A673 (cell line): ENCODE measurements at regions of chrX and their contacts with region 1.

Region 1: DNA sequence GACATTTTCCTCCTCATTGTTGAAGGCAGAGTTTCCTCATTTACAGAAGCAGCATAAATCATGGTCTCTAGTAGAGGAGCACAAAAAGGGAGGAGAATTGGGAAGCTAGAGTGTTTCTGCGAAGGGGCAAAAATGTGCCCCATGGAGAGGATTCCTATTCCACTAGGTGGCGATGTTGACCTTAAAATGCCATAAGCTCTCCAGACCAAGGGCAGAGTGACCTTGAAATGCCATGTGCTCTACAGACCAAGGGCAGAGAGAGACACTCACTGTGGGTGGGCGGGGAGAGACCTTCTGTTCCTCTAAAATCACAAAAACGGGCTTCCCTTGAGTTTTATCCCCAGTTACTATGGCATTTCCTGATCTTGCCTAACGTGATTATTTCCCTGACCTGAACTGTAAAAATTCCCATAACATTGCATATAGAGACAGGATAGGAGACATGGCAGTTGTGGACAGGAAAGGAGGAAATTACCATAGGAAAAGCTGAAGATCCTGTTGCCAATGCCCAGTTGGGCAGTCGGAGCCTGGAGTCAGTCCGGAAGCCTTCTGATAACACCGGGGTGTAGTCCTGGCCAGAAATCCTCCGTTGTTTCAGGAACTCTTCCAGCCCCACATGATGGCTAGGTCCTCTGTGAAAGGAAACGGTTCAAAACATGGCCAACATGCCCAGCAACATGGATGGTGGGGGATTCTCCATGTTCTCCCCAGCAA is 567.7 kb downstream of the MAGEB5 start:
- DNase-seq: peak; percentile 62
- H3K4me3 ChIP-seq: no peak overlapping the region
- H3K27ac ChIP-seq: no peak overlapping the region
- H3K4me1 ChIP-seq: no peaks in the 10 kb centered on the region
- H3K27me3 ChIP-seq: no peaks in the 10 kb centered on the region
- CTCF ChIP-seq: peak; percentile 66

Region 2: GRCh38 chrX:26918633-26919032 is 135.0 kb after region 1 on chrX:
- CTCF ChIA-PET with region 1: no interaction called
- POLR2A ChIA-PET with region 1: no interaction called
- intact Hi-C with region 1: loop called (anchors 2 kb)
- DNase-seq: peak; percentile 63
- H3K4me3 ChIP-seq: no peak overlapping the region
- H3K27ac ChIP-seq: no peak overlapping the region
- H3K4me1 ChIP-seq: no peaks in the 10 kb centered on the region
- H3K27me3 ChIP-seq: no peaks in the 10 kb centered on the region
- CTCF ChIP-seq: peak; percentile 72

Region 3: GRCh38 chrX:27186664-27187063 is 403.0 kb after region 1 on chrX:
- CTCF ChIA-PET with region 1: interaction called, 4 read pairs
- POLR2A ChIA-PET with region 1: no interaction called
- intact Hi-C with region 1: loop called (anchors 1 kb)
- DNase-seq: peak; percentile 61
- H3K4me3 ChIP-seq: no peak overlapping the region
- H3K27ac ChIP-seq: no peak overlapping the region
- H3K4me1 ChIP-seq: no peaks in the 10 kb centered on the region
- H3K27me3 ChIP-seq: no peaks in the 10 kb centered on the region
- CTCF ChIP-seq: peak; percentile 84

Region 4: DNA sequence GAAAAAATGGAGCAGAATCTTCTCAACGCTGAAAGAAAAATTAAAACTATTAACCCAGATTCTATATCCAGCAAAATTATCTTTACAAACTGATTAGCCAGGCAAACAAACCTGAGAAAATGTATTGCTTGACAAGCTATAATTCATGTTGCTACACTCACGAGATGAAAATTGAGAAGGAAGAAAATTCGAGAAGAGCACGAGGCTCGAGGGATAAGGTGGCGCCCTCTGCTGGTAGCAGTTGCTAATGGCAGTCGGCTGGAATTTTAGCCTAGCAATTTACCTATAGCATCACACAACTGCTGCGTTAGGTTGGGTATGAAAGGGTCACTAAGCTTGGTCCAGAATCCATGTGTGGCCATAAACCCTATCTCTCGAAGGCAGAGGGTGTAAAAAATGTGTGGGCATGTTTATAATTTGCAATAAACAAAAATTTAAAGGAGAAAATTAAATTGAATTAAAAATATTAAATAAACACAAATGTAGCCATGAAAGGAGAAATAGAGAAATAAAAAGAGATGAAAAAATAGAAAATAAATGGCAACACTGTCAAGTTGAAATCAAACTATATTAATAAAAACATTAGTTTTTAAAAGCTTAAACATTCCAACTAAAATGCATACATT is 552.9 kb after region 1 on chrX:
- CTCF ChIA-PET with region 1: no interaction called
- POLR2A ChIA-PET with region 1: no interaction called
- intact Hi-C with region 1: loop called (anchors 5 kb)
- DNase-seq: peak; percentile 45
- H3K4me3 ChIP-seq: no peak overlapping the region
- H3K27ac ChIP-seq: no peak overlapping the region
- H3K4me1 ChIP-seq: no peaks in the 10 kb centered on the region
- H3K27me3 ChIP-seq: no peaks in the 10 kb centered on the region
- CTCF ChIP-seq: peak; percentile 93

Region 5: DNA sequence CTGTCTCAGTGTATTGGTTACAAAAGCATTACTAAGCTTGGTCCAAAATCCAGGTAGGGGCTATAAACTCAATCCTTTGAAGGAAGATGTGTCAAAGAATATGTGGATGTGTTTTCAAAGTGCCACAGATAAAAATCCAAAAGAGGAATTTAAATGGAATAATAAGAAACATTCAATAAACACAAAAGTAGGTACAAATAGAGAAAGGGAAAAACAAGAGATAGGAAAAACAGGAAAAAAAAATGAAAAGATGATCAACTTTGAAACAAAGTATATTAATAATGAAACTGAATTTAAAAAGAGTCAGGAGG is 615.4 kb after region 1 on chrX:
- CTCF ChIA-PET with region 1: no interaction called
- POLR2A ChIA-PET with region 1: no interaction called
- intact Hi-C with region 1: loop called (anchors 2 kb)
- DNase-seq: no peak
- H3K4me3 ChIP-seq: no peak overlapping the region
- H3K27ac ChIP-seq: no peak overlapping the region
- H3K4me1 ChIP-seq: no peaks in the 10 kb centered on the region
- H3K27me3 ChIP-seq: peaks cover 5% of the 10 kb centered on the region
- CTCF ChIP-seq: no peak